ENCODE measurements at regions of chr3 and their contacts with region 1.

Region 1: GRCh38 chr3:168165390-168166269 is 69.9 kb upstream of the GOLIM4 start:
- DNase-seq: peak; percentile 66
- CTCF ChIP-seq: peak; percentile 64

Region 2: DNA sequence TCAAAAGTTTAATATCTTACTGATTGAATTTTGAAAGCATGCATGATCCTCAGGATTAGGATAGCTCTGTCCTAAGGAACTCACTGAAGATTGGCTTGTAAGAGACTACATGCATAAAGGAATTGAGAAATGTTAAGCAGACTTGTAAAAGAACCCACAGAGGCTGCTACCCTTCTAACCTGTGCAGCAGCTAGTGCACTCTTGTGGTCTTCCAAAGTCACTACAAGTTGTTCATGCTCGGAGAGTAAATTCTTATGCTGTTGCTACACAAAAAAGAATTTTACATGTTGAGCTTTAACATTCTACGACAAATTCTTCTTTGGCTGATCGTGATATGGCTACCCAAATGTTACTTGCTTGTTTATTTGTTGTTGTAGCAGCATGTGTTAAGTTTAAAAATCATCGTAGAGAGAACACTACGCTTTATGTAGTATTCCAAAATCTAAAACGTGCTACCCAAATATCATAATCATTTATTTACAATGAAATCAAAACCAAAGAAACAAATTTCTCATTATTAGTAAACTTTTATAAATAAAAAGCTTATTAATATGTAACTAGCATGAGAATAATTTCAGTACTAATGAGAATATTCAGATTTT is 124.9 kb before region 1 on chr3:
- CTCF ChIA-PET with region 1: interaction called, 195 read pairs
- POLR2A ChIA-PET with region 1: no interaction called
- DNase-seq: peak; percentile 26
- CTCF ChIP-seq: peak; percentile 34

Region 3: DNA sequence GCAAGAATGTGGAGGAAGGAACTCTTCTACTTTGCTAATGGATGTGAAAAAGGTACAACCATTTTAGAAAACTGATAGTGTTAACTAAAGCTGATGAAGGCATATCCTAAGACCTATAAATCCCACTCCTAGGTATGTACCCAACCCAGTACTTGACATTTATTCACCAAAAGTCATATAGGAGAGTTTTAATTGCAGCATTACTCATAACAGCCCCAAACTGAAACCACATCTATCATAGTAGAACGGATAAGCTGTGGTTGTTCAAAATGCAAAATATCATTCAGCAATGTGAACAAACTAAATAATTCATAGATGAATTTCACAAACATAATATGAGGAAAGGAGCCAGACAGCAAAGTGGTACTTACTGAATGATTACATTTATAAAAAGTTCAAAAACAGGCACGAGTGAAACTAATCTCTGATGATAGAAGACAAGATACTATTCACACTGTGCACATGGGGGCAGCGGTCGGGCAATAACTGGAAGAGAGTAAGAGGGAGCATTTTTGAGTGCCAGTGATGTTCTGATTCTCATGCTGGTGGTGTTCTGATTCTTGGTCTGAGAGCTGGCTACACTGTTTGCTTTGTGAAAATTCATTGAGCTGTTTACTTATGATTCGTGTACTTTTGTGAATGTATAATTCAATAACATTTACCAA is 104.2 kb before region 1 on chr3:
- CTCF ChIA-PET with region 1: interaction called, 18 read pairs
- POLR2A ChIA-PET with region 1: no interaction called
- DNase-seq: no peak
- CTCF ChIP-seq: no peak

Region 4: GRCh38 chr3:168095611-168096209 is 69.9 kb before region 1 on chr3 and contains the start of gene GOLIM4:
- CTCF ChIA-PET with region 1: interaction called, 13 read pairs
- POLR2A ChIA-PET with region 1: no interaction called
- DNase-seq: peak; percentile 96
- CTCF ChIP-seq: peak; percentile 30

Region 5: GRCh38 chr3:168186293-168186983 is 20.8 kb after region 1 on chr3:
- CTCF ChIA-PET with region 1: interaction called, 19 read pairs
- POLR2A ChIA-PET with region 1: no interaction called
- DNase-seq: no peak
- CTCF ChIP-seq: no peak

Measured in GM10248 (cell line).